ENCODE measurements at regions of chr6 and their contacts with region 1.

Region 1: GRCh38 chr6:145734486-145735355 is 599 bp downstream of the EPM2A start:
- DNase-seq: peak; percentile 86
- H3K4me3 ChIP-seq: peak overlapping the region; percentile 67 to 86 (median 73)
- H3K27ac ChIP-seq: peak overlapping the region; percentile 82
- H3K4me1 ChIP-seq: peaks cover 10% of the 10 kb centered on the region
- H3K27me3 ChIP-seq: no peaks in the 10 kb centered on the region
- CTCF ChIP-seq: no peak

Region 2: DNA sequence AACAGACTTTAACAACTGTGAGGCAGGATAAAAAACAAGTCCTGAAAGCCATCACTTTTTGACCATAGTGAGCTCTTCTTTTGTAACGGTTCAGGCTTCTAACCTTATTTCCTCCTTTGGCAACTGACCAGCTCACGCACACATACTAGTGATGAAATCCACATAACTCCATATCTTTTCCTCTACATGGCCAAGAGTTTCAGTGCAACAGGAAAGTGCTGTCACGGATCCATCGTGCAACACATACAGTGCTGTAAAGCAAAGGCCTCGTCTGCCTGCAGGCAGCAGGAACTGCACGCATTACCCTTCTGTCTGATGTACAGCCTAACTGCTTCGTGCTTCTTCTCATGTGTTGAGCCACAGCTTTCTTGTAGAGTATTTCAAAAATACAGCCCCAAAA is 107.9 kb before region 1 on chr6:
- CTCF ChIA-PET with region 1: no interaction called
- dilution Hi-C with region 1: no loop called
- in situ Hi-C with region 1: no loop called
- intact Hi-C with region 1: no loop called
- DNase-seq: no peak
- H3K4me3 ChIP-seq: no peak overlapping the region
- H3K27ac ChIP-seq: no peak overlapping the region
- H3K4me1 ChIP-seq: no peaks in the 10 kb centered on the region
- H3K27me3 ChIP-seq: no peaks in the 10 kb centered on the region
- CTCF ChIP-seq: no peak

Region 3: DNA sequence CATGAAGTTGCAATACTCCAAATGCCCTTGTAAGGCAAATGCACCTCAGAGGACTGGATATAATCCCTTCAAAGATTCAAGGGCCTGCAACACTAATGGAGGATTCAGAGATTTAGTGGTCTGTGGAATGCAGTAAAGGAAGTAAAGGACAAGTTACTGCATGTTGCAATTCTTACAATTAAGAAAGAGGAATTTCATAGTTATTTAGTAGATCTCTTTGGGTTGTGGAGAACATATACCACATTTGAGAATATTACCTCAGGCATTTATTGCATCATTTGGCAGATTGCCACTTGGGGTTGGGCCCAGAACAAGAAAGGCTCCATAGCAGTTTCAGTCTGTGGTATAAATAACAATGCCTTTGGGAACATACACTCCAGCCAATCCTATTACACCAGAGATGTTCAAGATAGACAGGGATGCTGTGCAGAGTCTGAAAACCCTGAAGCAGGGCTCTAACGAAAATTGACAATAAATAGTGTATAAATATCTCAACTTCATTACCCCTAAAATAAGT is 21.5 kb after region 1 on chr6:
- CTCF ChIA-PET with region 1: no interaction called
- dilution Hi-C with region 1: no loop called
- in situ Hi-C with region 1: no loop called
- intact Hi-C with region 1: loop called (anchors 1 kb)
- DNase-seq: peak; percentile 96
- H3K4me3 ChIP-seq: no peak overlapping the region
- H3K27ac ChIP-seq: peak overlapping the region; percentile 55
- H3K4me1 ChIP-seq: peaks cover 20% of the 10 kb centered on the region
- H3K27me3 ChIP-seq: no peaks in the 10 kb centered on the region
- CTCF ChIP-seq: no peak

Region 4: DNA sequence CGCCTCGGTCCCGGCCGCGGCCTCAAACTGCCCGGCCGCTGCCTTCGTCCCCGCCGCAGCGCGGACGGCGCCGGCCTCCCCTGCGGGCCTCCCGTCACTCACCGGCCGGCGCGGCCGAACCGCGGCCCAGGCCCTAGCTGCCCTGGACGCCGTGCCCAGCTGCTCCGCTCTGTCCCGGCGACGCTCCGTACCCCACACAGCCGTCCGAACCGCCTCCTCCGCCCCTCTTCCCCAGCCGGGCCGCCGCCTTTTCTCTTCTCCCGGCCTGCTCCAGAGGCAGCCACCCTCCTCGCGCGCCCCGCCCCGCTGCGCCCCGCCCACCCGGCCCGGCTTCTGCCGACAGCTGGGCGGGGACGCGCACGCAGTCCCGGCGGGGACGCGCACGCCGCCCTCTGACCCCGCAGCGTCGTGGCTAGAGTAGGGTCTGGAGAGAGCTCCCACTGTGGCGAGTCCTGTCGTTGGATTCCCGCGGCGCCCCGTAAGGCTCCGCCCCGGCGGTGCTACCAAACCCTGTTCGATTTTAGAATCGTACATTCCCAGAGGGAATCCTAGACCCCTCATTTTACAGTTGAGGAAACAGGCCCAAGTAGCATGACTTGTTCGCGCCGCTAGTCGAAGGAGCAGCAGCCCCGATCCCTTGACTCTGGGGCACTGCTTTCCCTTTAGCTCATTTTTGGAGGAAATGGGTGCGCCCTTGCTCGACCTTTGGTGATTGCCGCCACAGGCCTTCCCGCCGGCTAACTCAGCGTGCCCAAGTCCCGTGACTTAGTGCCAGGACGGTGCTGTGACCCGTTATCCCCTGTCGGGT is 80.0 kb after region 1 on chr6 and contains the start of gene FBXO30:
- CTCF ChIA-PET with region 1: no interaction called
- dilution Hi-C with region 1: no loop called
- in situ Hi-C with region 1: no loop called
- intact Hi-C with region 1: loop called (anchors 1 kb)
- DNase-seq: peak; percentile 83
- H3K4me3 ChIP-seq: peak within 1 kb of the TSS; percentile 83 to 92 (median 89)
- H3K27ac ChIP-seq: peak within 1 kb of the TSS; percentile 80
- H3K4me1 ChIP-seq: peaks cover 17% of the 10 kb centered on the region
- H3K27me3 ChIP-seq: no peaks in the 10 kb centered on the region
- CTCF ChIP-seq: no peak
- total RNA-seq, gene FBXO30: 10.9 to 14.2 TPM

Region 5: GRCh38 chr6:145887969-145888368 is 153.2 kb after region 1 on chr6:
- CTCF ChIA-PET with region 1: no interaction called
- dilution Hi-C with region 1: no loop called
- in situ Hi-C with region 1: no loop called
- intact Hi-C with region 1: loop called (anchors 2 kb)
- DNase-seq: no peak
- H3K4me3 ChIP-seq: no peak overlapping the region
- H3K27ac ChIP-seq: no peak overlapping the region
- H3K4me1 ChIP-seq: no peaks in the 10 kb centered on the region
- H3K27me3 ChIP-seq: no peaks in the 10 kb centered on the region
- CTCF ChIP-seq: peak; percentile 42 to 54

Region 6: DNA sequence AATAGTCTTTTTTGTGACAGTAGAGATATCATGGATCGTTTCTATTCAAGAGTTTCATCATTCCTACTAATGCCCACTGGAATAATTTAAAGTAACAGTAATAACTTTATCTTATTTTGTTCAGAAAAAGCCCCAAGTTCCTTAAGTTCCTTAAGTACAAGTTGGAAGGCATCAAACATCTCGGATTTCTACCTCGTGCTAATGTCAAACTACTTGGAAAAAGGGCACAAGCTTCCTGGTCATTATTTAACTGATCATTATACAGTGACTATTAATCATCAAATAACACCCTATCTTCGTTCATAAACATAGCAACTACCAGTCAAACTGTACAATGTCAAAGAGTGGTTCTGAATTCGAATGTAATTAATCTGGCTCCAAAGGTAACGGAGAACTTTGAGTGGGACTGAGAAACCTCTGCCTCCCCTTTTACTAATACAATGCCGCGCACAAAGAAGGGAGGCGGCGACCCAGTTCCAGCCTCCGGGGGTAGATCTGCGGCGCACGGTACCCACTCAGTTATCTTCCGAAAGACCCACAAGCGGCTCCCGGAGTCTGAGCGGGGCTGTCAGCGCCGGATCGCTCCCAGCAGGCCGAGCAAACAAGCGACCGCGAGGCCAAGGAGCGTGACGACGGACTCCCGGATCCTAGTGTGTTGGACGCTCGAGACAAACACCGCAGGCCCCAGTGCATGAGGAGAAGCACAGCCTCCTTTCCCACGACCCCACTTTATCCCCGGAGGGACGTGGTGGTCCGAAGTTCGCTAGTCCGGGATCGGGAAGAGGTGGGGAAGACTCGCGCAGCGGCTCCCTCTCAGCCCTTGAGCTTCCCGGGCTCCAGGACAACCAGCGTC is 228.7 kb after region 1 on chr6:
- CTCF ChIA-PET with region 1: no interaction called
- dilution Hi-C with region 1: no loop called
- in situ Hi-C with region 1: no loop called
- intact Hi-C with region 1: loop called (anchors 2 kb)
- DNase-seq: peak; percentile 54
- H3K4me3 ChIP-seq: peak overlapping the region; percentile 68 to 96 (median 85)
- H3K27ac ChIP-seq: peak overlapping the region; percentile 71
- H3K4me1 ChIP-seq: peaks cover 5% of the 10 kb centered on the region
- H3K27me3 ChIP-seq: no peaks in the 10 kb centered on the region
- CTCF ChIP-seq: no peak